Right cardiac atrium (tissue), 5 donors: ENCODE measurements at regions of chr12 and their contacts with region 1.

Region 1: DNA sequence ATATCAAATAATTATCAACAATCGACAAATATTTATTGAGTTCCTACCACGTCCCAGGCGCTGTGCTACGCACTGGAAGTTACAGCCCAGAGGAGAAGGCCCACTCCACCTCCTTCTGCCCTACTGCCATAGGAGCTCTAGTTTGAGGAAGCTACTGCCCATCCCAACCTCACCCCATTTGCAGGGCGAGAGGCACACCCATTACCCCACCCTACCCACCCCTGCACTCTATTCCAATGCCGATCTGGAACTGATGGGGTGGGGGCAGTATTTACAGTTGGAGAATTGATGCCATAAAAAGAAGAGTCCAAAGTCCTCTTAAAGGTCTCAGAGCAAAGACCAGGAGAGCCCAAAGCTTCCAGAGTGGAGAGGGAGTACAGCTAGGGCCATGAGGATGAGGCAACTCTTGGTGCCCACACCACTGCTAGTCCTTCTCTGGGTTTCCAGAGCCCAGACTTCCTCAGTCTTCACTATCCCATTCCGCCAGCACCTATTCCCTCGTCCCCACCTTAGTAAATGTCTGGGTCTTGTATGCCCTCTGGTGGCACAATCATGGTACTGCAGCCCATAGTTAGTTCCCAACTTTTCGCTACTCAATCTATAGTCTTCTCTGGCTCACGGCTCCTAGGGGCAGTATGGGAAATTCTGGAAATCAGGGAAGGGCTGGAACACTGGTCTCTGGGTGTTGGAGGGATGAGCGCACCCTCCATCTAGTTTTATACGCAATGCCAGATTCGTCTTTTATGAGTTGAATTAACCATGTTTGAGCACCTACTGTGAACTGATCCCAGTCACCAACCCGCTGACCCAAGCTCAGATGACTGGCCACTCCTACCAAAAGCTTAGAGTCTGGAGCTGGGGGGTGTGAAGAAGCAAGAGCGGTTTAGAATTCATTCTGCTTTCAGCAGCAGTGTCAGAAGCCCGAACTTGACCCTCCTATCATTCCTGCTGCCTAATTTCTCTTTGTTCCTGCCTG is 6.9 kb upstream of the ADCY6 start:
- DNase-seq: peak in 2 of 3 donors; percentile 57 to 77
- ATAC-seq: peak; percentile 89 to 91
- H3K4me3 ChIP-seq: no peak overlapping the region
- H3K27ac ChIP-seq: no peak overlapping the region
- H3K4me1 ChIP-seq: no peaks in the 10 kb centered on the region
- H3K27me3 ChIP-seq: no peaks in the 10 kb centered on the region

Region 2: DNA sequence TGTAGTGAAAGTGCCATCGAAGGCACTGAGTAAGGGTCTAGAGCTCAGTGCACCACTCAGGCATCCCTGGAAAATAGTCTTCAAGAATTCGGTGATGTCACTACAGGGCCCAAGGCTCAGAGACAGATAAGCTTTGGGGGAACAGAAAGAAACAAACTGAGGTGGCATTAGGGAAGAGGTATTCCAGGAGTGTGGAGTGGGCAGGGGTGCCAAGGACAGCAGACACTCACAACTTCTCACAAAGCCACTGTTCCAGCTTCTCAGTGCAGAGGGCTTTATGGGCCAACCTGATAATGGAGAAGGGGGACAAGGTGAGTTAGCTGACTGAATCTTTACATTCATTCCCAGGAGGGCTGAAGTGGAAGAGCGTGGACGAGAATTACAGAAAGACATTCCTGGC is 228.0 kb before region 1 on chr12:
- intact Hi-C with region 1: no loop called
- DNase-seq: no peak
- ATAC-seq: no peak
- H3K4me3 ChIP-seq: no peak overlapping the region
- H3K27ac ChIP-seq: no peak overlapping the region
- H3K4me1 ChIP-seq: no peaks in the 10 kb centered on the region
- H3K27me3 ChIP-seq: no peaks in the 10 kb centered on the region

Region 3: GRCh38 chr12:48750769-48751735 is 44.7 kb before region 1 on chr12:
- intact Hi-C with region 1: loop called (anchors 1 to 5 kb)
- DNase-seq: no peak
- ATAC-seq: no peak
- H3K4me3 ChIP-seq: no peak overlapping the region
- H3K27ac ChIP-seq: no peak overlapping the region
- H3K4me1 ChIP-seq: peaks cover 1% of the 10 kb centered on the region
- H3K27me3 ChIP-seq: no peaks in the 10 kb centered on the region

Region 4: DNA sequence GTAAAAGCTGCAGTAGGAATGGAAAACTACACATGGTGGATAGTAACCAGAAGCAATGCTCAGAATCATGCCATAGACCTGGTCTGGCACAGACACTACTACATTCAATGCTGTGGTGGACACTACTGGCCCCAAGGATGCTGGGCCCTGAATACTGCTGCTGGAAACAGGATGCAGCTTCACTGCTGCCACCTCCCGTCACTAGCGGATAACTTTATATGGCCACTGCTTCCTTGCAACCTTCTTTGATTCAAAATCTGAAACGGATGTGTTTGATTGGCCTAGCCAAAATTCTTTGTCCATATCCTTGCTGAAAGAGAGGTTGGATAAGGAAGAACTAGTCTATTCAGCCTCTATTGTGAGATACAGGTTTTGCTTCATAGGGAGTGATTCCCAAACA is 37.5 kb before region 1 on chr12:
- intact Hi-C with region 1: loop called (anchors 1 to 5 kb)
- DNase-seq: no peak
- ATAC-seq: no peak
- H3K4me3 ChIP-seq: no peak overlapping the region
- H3K27ac ChIP-seq: no peak overlapping the region
- H3K4me1 ChIP-seq: peaks cover 1% of the 10 kb centered on the region
- H3K27me3 ChIP-seq: no peaks in the 10 kb centered on the region